ENCODE measurements at regions of chr10 and their contacts with region 1.

Region 1: DNA sequence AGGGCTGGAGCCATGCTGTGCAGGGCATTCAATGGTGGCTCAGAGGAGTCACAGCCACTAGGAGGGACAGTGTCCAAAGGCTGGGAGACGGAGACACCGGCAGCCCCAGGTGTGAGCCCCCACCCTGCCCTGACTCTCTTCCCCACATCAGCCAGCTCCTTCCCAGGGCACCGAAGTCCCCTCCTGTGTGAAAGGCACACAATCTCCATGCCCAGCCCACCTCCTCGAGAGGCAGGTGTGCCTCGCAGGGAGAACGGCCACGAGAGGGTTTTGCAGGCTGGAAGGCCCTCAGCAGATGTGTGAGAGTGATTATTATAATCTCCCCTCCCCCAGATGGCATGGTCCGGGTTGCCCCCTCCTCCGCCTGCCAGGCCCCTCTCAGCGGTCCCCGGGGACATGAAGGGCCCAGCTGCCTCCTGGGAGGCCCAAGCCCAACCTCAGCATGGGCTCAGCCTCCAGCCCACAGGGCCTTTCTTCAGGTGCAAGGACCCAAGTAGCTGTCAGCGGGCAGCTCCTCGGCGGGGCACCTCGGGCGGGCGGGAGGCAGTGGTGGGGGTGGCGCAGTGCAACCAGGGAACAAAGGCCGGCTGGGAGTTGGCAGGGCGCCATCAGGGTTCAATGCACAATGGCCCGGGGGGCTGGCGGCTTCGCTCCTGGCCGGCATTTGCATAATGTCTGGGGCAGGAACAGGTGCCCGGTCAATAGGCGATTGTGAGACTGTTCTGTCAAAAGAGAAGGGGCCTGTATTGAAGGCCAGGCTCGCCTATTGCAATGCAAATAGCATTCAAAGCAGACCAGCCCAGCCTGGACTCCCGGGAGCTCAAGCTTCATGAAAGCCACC is 155.3 kb upstream of the ZMIZ1 start:
- DNase-seq: peak; percentile 54 to 98 (median 94)
- H3K4me3 ChIP-seq: no peak overlapping the region
- H3K27ac ChIP-seq: peak overlapping the region in 51 of 59 donors; percentile 1 to 89 (median 70)
- H3K27me3 ChIP-seq: no peaks in the 10 kb centered on the region
- CTCF ChIP-seq: peak in 23 of 56 donors; percentile 5 to 59 (median 23)

Region 2: DNA sequence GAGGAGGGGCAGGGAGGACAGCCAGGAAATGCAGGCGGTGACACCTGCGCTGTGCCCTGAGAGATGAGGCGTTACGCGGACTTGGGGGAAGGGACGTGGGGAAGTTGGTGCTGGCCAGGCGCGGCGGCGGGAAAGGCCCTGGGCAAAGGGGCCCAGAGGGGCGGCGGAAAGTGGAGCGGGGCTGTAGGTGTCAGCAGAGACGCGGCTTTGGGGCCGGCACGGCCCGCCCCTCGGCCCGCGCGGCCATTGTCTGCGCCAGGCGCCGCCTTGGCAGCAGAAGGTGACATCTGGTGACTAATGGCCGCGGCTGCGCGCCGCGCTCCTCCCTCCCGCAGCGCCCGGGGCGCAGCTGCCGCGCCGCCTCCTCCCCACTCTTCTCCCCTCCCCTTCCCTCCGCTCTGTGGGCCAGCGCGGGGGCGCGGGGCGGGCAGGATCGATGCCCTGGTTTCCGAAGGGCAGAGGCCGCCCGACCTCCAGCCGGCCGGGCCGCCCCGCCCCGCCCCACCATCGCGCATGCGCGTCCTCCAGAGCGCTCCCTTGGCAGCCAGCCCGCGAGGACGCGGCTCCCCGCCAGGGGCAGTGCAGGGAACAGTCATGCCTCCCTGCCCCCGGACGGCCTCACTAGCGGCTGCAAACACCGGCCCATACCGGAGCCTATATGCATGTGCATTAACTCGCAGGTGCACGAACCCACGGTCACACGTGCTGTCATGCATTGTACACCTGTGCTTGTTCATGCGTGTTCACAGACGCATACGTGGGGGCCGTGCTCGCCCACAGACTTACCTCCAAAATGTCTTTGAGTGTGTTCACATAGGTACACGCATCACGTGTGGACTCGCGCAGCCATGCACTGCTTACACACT is 610.2 kb before region 1 on chr10:
- intact Hi-C with region 1: loop called (anchors 5 to 10 kb)
- DNase-seq: peak; percentile 79 to 95 (median 90)
- H3K4me3 ChIP-seq: peak overlapping the region; percentile 36 to 78 (median 65)
- H3K27ac ChIP-seq: peak overlapping the region; percentile 70 to 99 (median 96)
- H3K27me3 ChIP-seq: no peaks in the 10 kb centered on the region
- CTCF ChIP-seq: peak; percentile 14 to 73 (median 57)

Region 3: DNA sequence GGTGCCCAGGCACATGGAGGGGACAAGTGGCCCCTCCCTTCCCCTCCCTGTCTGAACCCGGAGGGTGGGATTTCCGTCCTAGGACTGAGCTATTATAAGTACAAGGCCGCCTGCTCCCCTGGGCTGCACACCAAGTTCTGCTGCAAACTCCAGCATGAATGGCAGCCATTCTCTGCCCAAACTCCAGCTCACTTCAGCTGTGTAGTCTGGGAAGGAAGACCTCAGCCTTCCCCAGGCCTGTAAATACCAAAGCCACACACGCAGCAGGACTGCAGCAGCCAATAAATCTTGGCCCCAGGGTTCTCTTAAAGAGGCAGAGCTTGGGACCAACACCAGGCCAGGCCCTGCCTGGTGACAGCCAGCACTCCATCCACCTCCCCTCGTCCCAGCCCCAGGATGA is 136.0 kb before region 1 on chr10:
- intact Hi-C with region 1: loop called in 1 of 2 experiments (anchors 2 kb)
- DNase-seq: peak; percentile 19 to 89 (median 80)
- H3K4me3 ChIP-seq: no peak overlapping the region
- H3K27ac ChIP-seq: peak overlapping the region in 57 of 59 donors; percentile 3 to 92 (median 73)
- H3K27me3 ChIP-seq: no peaks in the 10 kb centered on the region
- CTCF ChIP-seq: peak in 13 of 56 donors; percentile 6 to 43 (median 11)

Region 4: DNA sequence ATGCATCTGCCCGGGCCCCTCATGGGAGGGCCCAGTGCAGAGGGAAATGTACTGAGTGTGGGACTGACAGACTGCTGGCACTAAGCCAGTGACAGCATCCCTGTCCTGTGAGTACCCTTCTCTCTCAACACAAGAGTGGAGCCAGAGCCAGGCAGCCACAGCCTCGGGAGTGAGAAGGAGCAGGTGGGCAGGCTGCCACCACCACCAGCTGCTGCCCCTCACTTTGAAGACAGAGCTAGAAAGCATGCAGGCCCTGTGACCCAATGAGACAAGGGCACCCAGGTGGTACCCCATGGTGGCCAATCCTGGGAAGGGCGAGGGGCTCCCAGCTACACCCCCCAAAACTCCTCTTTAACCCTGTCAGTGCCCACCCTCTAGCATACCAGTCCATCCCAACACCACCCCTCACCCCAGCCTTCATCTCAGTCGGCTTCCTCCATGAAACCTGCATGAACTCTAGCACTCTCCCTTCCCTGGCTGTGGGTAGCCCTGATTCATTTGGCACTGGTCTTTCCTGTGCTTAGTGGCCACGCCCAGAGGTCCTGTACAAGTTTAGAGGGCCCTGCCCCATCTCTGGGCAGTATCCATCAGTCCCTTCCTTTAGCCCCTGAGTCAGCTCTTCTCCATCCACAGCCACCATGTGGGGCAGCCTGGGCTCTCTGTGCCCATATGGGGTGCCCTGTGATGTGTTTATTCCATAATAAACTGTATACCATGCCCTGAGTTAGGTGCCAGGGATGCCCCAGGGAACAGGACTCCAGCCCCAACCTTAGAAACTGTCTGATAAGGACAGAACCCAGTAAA is 51.7 kb before region 1 on chr10:
- intact Hi-C with region 1: loop called (anchors 2 kb)
- DNase-seq: no peak
- H3K4me3 ChIP-seq: no peak overlapping the region
- H3K27ac ChIP-seq: no peak overlapping the region
- H3K27me3 ChIP-seq: no peaks in the 10 kb centered on the region
- CTCF ChIP-seq: no peak

Region 5: DNA sequence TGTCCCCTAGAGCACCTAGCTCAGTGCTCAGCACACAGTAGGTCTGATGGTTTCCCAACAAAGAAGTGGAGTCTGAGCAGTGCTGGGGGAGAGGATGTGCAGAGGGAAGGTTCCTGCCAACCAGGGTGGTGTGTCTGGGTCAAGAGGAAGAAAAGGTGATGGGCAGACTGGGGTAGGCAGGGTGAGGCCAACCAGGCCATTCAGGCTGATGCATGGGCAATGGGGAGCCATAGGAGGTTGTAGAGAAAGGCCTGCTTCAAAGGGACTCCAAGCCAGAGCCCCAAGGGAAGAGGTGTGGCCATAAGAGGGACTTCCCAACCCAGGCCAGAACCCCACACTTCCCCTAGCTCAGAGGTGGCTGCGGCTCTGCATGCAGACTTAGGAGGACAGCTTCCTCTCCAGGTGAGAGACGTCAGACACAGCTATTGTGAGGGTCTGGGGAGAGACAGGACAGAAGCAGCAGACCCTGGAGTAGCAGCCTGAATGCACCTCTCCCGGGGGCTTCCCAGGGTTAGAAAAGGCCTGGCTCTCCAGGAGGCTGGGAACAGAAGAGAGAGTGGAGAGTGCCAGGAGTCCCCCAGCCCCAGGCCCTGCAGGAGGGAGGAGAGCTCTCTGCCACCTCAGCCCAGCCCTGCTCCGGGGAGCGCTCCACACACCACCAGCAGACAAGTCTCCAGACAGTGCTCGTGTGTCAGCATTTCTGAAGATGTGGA is 68.0 kb after region 1 on chr10:
- intact Hi-C with region 1: no loop called
- DNase-seq: no peak
- H3K4me3 ChIP-seq: no peak overlapping the region
- H3K27ac ChIP-seq: no peak overlapping the region
- H3K27me3 ChIP-seq: no peaks in the 10 kb centered on the region
- CTCF ChIP-seq: no peak

Region 6: DNA sequence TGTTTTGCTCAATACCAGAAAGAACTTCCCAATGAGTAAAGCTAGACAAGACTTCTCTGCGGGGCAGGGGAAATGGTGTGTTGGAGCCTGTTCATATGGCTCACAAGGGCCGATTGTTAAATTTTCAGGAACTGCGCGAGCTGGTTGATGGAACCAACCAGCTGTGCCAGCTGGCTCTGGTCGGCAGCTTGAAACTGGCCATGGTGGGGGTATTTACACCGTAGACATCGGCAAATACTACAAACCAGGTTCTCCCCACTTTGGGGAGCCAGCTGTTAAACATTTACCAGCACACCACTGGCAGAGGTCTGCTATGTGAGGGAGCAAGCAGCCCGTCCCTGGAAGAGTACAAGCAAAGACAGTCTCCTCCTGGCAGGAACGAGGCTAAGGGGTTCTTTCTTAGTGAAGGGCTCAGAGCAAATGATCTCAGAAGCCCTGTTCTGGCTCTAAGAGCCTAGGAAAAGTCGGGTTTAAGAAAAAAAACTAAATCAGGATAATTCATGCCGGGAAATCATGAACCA is 146.5 kb after region 1 on chr10:
- intact Hi-C with region 1: loop called (anchors 2 to 5 kb)
- DNase-seq: peak in 8 of 10 donors; percentile 66 to 81 (median 74)
- H3K4me3 ChIP-seq: peak overlapping the region in 8 of 59 donors; percentile 1 to 14 (median 6)
- H3K27ac ChIP-seq: peak overlapping the region in 55 of 59 donors; percentile 4 to 89 (median 76)
- H3K27me3 ChIP-seq: no peaks in the 10 kb centered on the region
- CTCF ChIP-seq: peak in 6 of 56 donors; percentile 11 to 19 (median 14)

Measured in dorsolateral prefrontal cortex (tissue), 120 donors.